OCI-LY7 (cell line): ENCODE measurements at regions of chr19 and their contacts with region 1.

Region 1: GRCh38 chr19:41641879-41642485 is 15.1 kb upstream of the CEACAM4 start:
- DNase-seq: peak; percentile 66
- H3K4me3 ChIP-seq: no peak overlapping the region
- H3K27ac ChIP-seq: no peak overlapping the region
- H3K4me1 ChIP-seq: no peaks in the 10 kb centered on the region
- CTCF ChIP-seq: peak; percentile 97

Region 2: GRCh38 chr19:41691268-41691970 is 49.4 kb after region 1 on chr19:
- CTCF ChIA-PET with region 1: no interaction called
- POLR2A ChIA-PET with region 1: no interaction called
- intact Hi-C with region 1: loop called (anchors 5 kb)
- DNase-seq: no peak
- H3K4me3 ChIP-seq: no peak overlapping the region
- H3K27ac ChIP-seq: no peak overlapping the region
- H3K4me1 ChIP-seq: no peaks in the 10 kb centered on the region
- CTCF ChIP-seq: peak; percentile 76

Region 3: DNA sequence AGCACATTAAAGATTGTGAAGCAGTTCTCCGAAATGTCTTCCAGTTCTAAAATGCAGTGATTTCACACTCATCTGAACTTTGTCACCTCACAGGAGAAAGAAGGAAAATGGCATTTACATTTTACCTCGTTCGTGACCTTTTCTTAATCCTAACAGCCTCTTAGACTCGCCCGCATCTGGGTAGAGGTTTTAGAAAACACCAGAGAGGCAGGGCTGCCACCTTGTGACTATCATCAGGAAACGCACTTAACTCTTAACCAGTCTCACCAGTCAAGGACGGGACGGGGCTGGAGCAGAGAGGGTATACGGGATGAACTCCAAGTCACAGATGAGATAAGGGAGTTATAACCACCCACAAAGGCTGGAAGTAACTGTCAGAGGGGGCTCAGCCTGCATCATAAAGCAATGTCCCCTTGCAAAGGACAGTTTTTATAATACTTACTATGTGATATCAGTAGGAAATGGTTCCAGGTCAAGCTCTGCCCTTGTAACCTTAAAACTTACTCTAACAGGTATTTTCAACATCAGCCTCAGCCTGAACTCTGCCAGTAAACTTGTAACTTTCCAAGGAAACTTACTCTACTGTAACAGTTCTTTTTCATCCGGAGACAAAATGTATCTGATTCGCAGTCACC is 104.7 kb after region 1 on chr19:
- CTCF ChIA-PET with region 1: no interaction called
- POLR2A ChIA-PET with region 1: no interaction called
- intact Hi-C with region 1: loop called (anchors 5 kb)
- DNase-seq: peak; percentile 72
- H3K4me3 ChIP-seq: no peak overlapping the region
- H3K27ac ChIP-seq: no peak overlapping the region
- H3K4me1 ChIP-seq: peaks cover 13% of the 10 kb centered on the region
- CTCF ChIP-seq: peak; percentile 88